H1 (cell line): ENCODE measurements at regions of chr19 and their contacts with region 1.

Region 1: DNA sequence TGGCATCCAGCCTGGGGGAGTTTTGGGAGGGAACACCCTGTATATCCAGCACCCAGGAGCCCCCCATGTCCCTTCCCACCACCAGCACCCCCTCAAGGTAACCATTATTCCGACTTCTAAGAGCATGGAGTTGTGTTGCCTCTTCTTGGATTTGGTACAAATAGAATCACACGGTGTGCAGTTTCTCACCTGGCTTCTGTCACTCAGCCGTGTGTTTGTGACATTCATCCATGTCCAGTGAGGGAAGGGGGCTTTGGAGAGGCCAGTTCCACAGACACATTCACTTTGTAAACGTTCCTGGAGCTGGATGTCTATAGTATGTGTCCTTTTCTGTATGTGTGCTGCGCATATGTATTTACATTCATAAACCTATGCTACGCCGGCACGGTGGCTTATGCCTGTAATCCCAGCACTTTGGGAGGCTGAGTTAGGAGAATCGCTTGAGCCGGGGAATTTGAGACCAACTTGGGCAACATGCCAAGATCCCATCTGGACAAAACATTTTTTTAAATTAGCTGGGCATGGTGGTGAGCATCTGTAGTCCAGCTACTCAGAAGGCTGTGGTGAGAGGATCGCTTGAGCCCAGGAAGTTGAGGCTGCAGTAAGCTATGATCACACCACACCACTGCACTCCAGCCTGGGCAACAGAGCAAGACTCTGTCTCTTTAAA is 36.6 kb downstream of the MYH14 start:
- DNase-seq: no peak
- H3K4me3 ChIP-seq: no peak overlapping the region
- H3K27ac ChIP-seq: no peak overlapping the region
- H3K4me1 ChIP-seq: peaks cover 2 to 7% (median 3%) of the 10 kb centered on the region in 4 experiments; a peak in 5 of 7 replicates
- H3K27me3 ChIP-seq: no peaks in the 10 kb centered on the region
- CTCF ChIP-seq: no peak
- EP300 ChIP-seq: no peak
- POLR2A ChIP-seq: no peak
- RAD21 ChIP-seq: no peak

Region 2: GRCh38 chr19:50214761-50215575 is 25.1 kb before region 1 on chr19:
- CTCF ChIA-PET with region 1: interaction called, 12 read pairs
- POLR2A ChIA-PET with region 1: no interaction called
- DNase-seq: peak in 1 of 2 experiments; percentile 53
- H3K4me3 ChIP-seq: no peak overlapping the region
- H3K27ac ChIP-seq: no peak overlapping the region; the same call in 1 of the 2 replicates
- H3K4me1 ChIP-seq: peaks cover 0 to 12% (median 8%) of the 10 kb centered on the region in 4 experiments; a peak in 5 of 7 replicates
- H3K27me3 ChIP-seq: no peaks in the 10 kb centered on the region
- CTCF ChIP-seq: no peak
- EP300 ChIP-seq: peak in 1 of 2 experiments; percentile 15; a peak in 1 of 3 replicates
- POLR2A ChIP-seq: no peak
- RAD21 ChIP-seq: no peak

Region 3: DNA sequence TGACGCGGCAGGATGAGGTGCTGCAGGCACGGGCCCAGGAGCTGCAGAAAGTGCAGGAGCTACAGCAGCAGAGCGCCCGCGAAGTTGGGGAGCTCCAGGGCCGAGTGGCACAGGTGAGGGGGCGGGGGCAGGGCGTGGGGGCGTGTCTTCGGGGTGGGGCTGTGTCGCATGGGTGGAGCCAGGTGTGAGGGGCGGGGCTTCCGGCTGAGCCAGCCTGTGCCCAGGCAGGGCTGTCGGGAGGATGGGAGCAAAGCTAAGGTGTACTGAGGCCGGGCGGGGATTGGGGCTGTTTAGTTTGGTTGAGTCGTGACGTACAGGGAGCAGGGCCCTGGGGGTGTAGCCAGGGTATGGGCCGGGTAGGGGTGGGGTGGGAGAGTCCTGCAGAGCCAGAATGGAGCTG is 26.8 kb after region 1 on chr19:
- CTCF ChIA-PET with region 1: interaction called, 30 read pairs
- POLR2A ChIA-PET with region 1: interaction called, 3 read pairs
- DNase-seq: peak; percentile 84 to 97
- H3K4me3 ChIP-seq: peak overlapping the region in 1 of 4 experiments; percentile 15; a peak in 1 of 8 replicates
- H3K27ac ChIP-seq: no peak overlapping the region
- H3K4me1 ChIP-seq: peaks cover 0 to 6% (median 0%) of the 10 kb centered on the region in 4 experiments; a peak in 1 of 7 replicates
- H3K27me3 ChIP-seq: no peaks in the 10 kb centered on the region
- CTCF ChIP-seq: no peak
- EP300 ChIP-seq: no peak
- POLR2A ChIP-seq: no peak
- RAD21 ChIP-seq: no peak

Region 4: GRCh38 chr19:50308991-50309390 is 68.9 kb after region 1 on chr19:
- CTCF ChIA-PET with region 1: interaction called, 10 read pairs
- POLR2A ChIA-PET with region 1: interaction called, 3 read pairs
- DNase-seq: no peak
- H3K4me3 ChIP-seq: no peak overlapping the region
- H3K27ac ChIP-seq: no peak overlapping the region
- H3K4me1 ChIP-seq: peaks cover 5 to 12% (median 9%) of the 10 kb centered on the region in 4 experiments
- H3K27me3 ChIP-seq: peaks cover 0 to 17% (median 1%) of the 10 kb centered on the region in 4 experiments; a peak in 3 of 7 replicates
- CTCF ChIP-seq: no peak
- EP300 ChIP-seq: no peak
- POLR2A ChIP-seq: no peak
- RAD21 ChIP-seq: no peak

Region 5: GRCh38 chr19:50322234-50322633 is 82.2 kb after region 1 on chr19:
- CTCF ChIA-PET with region 1: no interaction called
- POLR2A ChIA-PET with region 1: no interaction called
- DNase-seq: no peak
- H3K4me3 ChIP-seq: no peak overlapping the region
- H3K27ac ChIP-seq: no peak overlapping the region
- H3K4me1 ChIP-seq: peaks cover 0 to 10% (median 8%) of the 10 kb centered on the region in 4 experiments; a peak in 6 of 7 replicates
- H3K27me3 ChIP-seq: peaks cover 2 to 6% (median 4%) of the 10 kb centered on the region in 4 experiments; a peak in 6 of 7 replicates
- CTCF ChIP-seq: no peak
- EP300 ChIP-seq: no peak
- POLR2A ChIP-seq: no peak
- RAD21 ChIP-seq: no peak